HEK293 (cell line): ENCODE measurements at regions of chr18 and their contacts with region 1.

Region 1: DNA sequence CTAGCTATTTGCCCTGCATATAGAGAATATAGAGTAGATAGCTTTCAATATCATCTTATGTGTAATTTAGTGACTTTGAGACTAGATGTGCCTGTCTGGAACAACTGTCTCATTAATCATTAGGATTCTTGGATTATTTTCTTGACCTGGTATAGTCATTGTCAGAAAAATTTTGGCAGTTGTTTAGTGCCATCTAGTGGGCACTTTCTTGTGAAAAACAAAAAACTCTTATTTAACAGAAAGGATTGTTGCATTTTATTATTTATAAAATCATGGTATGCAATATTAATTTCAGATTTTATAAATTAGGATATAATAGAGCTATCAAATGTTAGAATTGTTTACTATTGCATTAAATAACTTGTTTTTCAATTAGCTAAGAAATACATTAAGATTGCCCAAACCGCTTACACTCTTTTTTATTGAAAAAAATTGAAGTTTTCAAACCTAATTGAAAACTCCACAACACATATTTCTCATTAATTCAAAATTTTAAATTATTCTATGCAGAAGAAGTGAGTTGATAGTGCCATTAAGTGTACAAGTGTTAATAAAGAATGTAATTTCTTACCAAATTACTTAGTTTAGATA is 80.3 kb downstream of the DYNAP start:
- H3K4me3 ChIP-seq: no peak overlapping the region
- H3K27ac ChIP-seq: no peak overlapping the region
- H3K4me1 ChIP-seq: no peaks in the 10 kb centered on the region
- CTCF ChIP-seq: no peak

Region 2: DNA sequence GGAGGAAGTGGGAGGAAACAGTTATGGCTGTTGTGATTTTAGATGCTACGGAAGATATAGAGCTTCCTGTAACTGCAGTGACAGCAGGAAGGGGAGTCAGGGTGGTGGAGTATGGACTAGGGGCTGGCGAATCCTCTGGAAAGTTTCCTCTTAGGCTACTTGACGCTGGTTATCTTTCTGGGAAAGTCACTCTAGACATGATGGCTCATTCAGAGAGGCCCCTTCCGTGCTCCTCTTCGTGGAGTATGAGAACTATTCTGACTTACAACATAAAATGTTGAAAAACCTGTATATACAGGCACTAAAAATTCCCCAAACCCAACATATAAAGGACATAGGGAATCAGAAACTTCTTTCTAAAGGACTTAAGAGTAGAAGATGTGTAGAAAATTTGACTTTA is 234.9 kb before region 1 on chr18:
- CTCF ChIA-PET with region 1: interaction called, 98 read pairs
- POLR2A ChIA-PET with region 1: no interaction called
- H3K4me3 ChIP-seq: no peak overlapping the region
- H3K27ac ChIP-seq: no peak overlapping the region
- H3K4me1 ChIP-seq: peaks cover 3% of the 10 kb centered on the region; the same call in 1 of the 2 replicates
- CTCF ChIP-seq: no peak

Region 3: GRCh38 chr18:54465502-54465901 is 205.9 kb before region 1 on chr18:
- CTCF ChIA-PET with region 1: interaction called, 11 read pairs
- POLR2A ChIA-PET with region 1: no interaction called
- H3K4me3 ChIP-seq: no peak overlapping the region
- H3K27ac ChIP-seq: no peak overlapping the region
- H3K4me1 ChIP-seq: no peaks in the 10 kb centered on the region
- CTCF ChIP-seq: no peak

Region 4: DNA sequence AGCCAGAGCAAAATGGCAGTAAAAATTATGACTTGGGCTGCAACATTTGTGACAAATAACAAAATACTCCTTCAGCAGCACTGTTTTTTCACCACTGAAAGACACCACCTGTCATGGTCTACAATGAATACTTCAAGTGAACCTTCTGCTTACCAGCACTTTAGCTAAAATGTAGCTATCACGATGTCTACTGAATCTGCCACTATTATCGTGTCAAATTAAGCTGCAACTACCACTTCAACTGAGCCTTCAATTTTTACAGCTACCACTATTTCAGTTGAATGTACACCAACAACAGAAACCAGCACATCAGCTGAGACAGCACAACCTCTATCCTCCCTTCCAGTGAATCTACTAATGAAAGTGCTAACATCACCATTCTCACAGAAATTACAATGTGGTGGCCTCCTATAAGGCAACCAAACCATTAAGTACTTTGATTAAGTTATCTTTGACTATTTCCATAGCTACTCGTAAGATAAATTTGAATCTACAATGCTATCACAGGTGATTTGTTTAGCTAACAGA is 91.1 kb before region 1 on chr18:
- CTCF ChIA-PET with region 1: no interaction called
- POLR2A ChIA-PET with region 1: no interaction called
- H3K4me3 ChIP-seq: no peak overlapping the region
- H3K27ac ChIP-seq: no peak overlapping the region
- H3K4me1 ChIP-seq: no peaks in the 10 kb centered on the region
- CTCF ChIP-seq: no peak

Region 5: GRCh38 chr18:54641734-54642133 is 29.7 kb before region 1 on chr18:
- CTCF ChIA-PET with region 1: interaction called, 10 read pairs
- POLR2A ChIA-PET with region 1: no interaction called
- H3K4me3 ChIP-seq: no peak overlapping the region
- H3K27ac ChIP-seq: no peak overlapping the region
- H3K4me1 ChIP-seq: no peaks in the 10 kb centered on the region
- CTCF ChIP-seq: no peak

Region 6: DNA sequence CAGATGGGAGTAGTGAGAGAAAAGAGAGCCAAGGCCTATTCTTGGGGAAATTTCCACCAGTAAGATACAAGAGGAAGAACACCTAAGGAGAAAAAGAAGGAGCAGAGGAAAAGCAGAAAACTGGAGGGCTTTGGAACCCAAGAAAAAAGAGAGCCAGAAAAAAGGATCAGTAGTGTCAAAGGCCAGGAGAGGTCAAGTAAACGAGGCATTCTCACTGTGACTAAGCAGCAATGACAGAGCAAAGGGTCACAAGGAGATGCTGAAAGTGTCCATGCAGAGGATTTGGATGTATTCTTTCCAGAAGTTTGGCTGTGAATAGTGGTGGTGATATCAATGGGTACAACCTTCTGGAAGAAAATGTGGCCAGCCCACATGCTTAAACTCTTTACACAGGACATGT is 29.2 kb after region 1 on chr18:
- CTCF ChIA-PET with region 1: no interaction called
- POLR2A ChIA-PET with region 1: no interaction called
- H3K4me3 ChIP-seq: no peak overlapping the region
- H3K27ac ChIP-seq: no peak overlapping the region
- H3K4me1 ChIP-seq: no peaks in the 10 kb centered on the region
- CTCF ChIP-seq: no peak

Region 7: GRCh38 chr18:54805571-54806334 is 134.4 kb after region 1 on chr18:
- CTCF ChIA-PET with region 1: no interaction called
- POLR2A ChIA-PET with region 1: no interaction called
- H3K4me3 ChIP-seq: no peak overlapping the region
- H3K27ac ChIP-seq: no peak overlapping the region
- H3K4me1 ChIP-seq: no peaks in the 10 kb centered on the region
- CTCF ChIP-seq: no peak